ENCODE measurements at regions of chr1 and their contacts with region 1.

Region 1: DNA sequence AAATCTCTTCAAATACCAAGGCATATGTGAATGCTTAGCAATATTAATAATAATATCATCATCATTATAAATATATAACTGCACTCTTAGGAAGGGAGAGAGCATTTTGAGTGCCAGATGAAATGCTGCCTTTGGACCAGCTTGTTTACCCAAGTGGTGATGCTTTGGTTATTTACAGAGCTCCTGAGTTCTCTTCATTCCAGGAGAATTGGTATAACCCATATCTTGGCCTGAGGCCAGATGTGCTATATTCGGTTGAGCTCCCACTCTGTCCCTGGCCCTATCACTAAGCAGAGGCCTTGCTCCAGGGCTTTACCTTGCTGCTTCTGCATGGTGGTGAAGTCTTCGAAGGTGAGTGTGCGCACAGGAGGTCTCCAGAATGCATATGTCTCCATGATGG is 89.4 kb downstream of the TBX15 start:
- DNase-seq: no peak
- ATAC-seq: no peak
- H3K4me3 ChIP-seq: no peak overlapping the region
- H3K27ac ChIP-seq: no peak overlapping the region
- H3K4me1 ChIP-seq: no peaks in the 10 kb centered on the region
- H3K27me3 ChIP-seq: no peaks in the 10 kb centered on the region

Region 2: GRCh38 chr1:118809586-118809985 is 89.1 kb before region 1 on chr1:
- intact Hi-C with region 1: no loop called
- DNase-seq: no peak
- ATAC-seq: no peak
- H3K4me3 ChIP-seq: no peak overlapping the region
- H3K27ac ChIP-seq: no peak overlapping the region
- H3K4me1 ChIP-seq: no peaks in the 10 kb centered on the region
- H3K27me3 ChIP-seq: no peaks in the 10 kb centered on the region

Region 3: DNA sequence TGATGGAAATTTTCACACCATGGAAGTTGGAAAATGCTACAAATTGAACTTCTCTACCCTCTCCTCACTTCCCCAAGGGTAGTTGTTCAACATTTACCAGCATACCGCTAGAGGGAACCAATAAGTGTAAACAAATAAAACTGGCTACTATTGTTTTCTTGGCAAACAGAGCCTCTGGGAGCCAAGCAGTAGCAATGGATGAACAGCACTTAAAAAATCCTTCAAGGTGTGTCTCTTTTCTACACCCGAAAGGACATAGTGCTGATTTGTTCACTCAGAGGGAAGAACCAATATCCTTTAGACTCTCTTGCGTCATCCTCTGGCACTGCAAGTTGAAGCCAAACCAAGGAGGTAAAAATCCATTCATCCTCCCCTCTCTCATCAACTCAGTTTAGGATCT is 72.0 kb before region 1 on chr1:
- intact Hi-C with region 1: no loop called
- DNase-seq: no peak
- ATAC-seq: no peak
- H3K4me3 ChIP-seq: no peak overlapping the region
- H3K27ac ChIP-seq: no peak overlapping the region
- H3K4me1 ChIP-seq: no peaks in the 10 kb centered on the region
- H3K27me3 ChIP-seq: no peaks in the 10 kb centered on the region

Region 4: DNA sequence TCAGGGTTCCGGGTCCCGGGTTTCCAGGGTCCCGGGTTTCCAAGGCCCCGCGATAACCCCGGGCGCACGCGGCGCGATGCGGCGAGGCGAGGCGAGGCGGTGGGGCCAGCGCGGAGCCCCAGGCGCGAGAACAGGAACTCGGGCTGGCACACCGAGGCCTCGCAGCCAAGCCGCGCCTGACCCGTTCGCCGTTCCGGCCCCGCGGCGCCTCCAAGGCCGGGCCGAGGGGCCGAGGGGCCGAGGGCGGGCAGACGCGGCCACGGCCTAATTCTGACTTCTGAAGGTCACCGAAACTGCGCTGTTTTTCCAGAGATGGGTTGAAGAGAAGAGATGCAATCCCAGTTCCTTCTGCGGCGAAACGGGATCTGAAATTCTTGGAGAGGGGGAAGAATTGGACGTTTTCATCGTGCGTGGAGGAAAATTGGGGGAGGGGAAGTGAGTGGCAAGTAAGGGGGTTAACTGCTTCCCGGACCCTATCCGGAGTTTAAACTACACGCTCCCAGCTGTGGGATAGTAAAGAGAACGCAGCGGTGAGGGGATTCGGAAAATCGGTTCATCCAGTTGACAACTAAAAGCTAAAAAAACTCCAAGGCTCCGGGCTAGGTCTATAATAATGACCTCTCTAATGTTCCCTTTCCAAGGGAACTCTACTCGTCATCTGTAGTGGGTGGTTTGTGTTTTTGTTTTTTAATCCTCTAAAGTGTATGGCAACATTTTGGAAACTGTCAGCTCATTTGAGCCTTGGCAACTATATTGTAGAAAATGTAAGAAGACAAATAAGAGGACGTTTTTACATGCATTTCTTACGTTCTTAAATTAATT is 81.3 kb after region 1 on chr1:
- intact Hi-C with region 1: loop called in 1 of 4 experiments (anchors 10 kb)
- DNase-seq: no peak
- ATAC-seq: no peak
- H3K4me3 ChIP-seq: peak overlapping the region; percentile 31
- H3K27ac ChIP-seq: no peak overlapping the region
- H3K4me1 ChIP-seq: no peaks in the 10 kb centered on the region
- H3K27me3 ChIP-seq: peaks cover 3% of the 10 kb centered on the region